A549 (cell line): ENCODE measurements at regions of chr15 and their contacts with region 1.

Region 1: GRCh38 chr15:50675536-50676144 is 11.0 kb downstream of the TRPM7 start:
- DNase-seq: peak; percentile 25 to 52
- ATAC-seq: no peak; a peak in 1 of 6 replicates
- H3K4me3 ChIP-seq: no peak overlapping the region
- H3K27ac ChIP-seq: peak overlapping the region in 1 of 2 experiments; percentile 23; a peak in 1 of 6 replicates
- H3K4me1 ChIP-seq: peaks cover 24% of the 10 kb centered on the region
- CTCF ChIP-seq: peak; percentile 88
- EP300 ChIP-seq: no peak
- POLR2A ChIP-seq: no peak
- RAD21 ChIP-seq: peak; percentile 76 to 87

Region 2: GRCh38 chr15:50523851-50524251 is 151.8 kb before region 1 on chr15:
- CTCF ChIA-PET with region 1: no interaction called
- POLR2A ChIA-PET with region 1: no interaction called
- DNase-seq: no peak
- ATAC-seq: no peak
- H3K4me3 ChIP-seq: no peak overlapping the region
- H3K27ac ChIP-seq: no peak overlapping the region
- H3K4me1 ChIP-seq: no peaks in the 10 kb centered on the region
- CTCF ChIP-seq: no peak
- EP300 ChIP-seq: no peak
- POLR2A ChIP-seq: no peak
- RAD21 ChIP-seq: no peak

Region 3: DNA sequence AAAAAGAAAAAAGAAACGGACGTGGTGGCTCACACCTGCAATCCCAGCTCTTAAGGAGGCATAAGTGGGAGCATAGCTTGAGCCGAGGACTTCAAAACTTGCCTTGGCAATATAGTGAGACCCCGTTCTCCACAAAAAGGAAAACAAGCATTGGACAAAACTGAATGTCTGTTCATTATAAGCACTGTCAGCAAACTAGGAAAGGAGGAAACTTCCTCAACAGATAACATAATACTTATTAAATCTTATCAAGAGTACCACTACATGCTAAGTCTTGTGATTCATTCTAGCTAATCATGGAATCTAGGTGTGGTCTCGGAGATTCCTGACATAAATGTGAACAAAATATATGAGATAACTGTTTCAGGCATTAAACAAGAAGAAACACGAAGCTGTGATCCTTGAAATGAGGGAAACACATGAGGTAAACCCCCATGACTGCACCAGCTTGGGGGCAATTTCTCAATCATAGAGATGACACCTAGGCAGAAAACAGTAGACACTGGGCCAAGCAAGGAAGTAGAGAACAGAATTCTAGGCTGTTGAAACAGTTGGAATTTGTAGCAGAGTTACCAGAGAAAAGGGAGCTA is 22.4 kb before region 1 on chr15:
- CTCF ChIA-PET with region 1: interaction called, 11 read pairs
- POLR2A ChIA-PET with region 1: interaction called, 4 read pairs
- DNase-seq: no peak
- ATAC-seq: no peak
- H3K4me3 ChIP-seq: no peak overlapping the region
- H3K27ac ChIP-seq: no peak overlapping the region
- H3K4me1 ChIP-seq: no peaks in the 10 kb centered on the region
- CTCF ChIP-seq: no peak
- EP300 ChIP-seq: no peak
- POLR2A ChIP-seq: no peak
- RAD21 ChIP-seq: no peak

Region 4: GRCh38 chr15:50686468-50687301 is 11.0 kb after region 1 on chr15 and contains the start of gene TRPM7:
- CTCF ChIA-PET with region 1: interaction called, 15 read pairs
- POLR2A ChIA-PET with region 1: interaction called, 7 read pairs
- DNase-seq: peak; percentile 89 to 93
- ATAC-seq: peak; percentile 91
- H3K4me3 ChIP-seq: peak within 1 kb of the TSS; percentile 71
- H3K27ac ChIP-seq: peak within 1 kb of the TSS; percentile 85 to 93
- H3K4me1 ChIP-seq: peaks cover 22% of the 10 kb centered on the region
- CTCF ChIP-seq: no peak; the same call in 2 of the 3 replicates
- EP300 ChIP-seq: no peak
- POLR2A ChIP-seq: peak; percentile 93
- RAD21 ChIP-seq: no peak
- polyA plus RNA-seq, gene TRPM7: 39.2 and 47.8 TPM in 2 replicates